ENCODE measurements at regions of chr14 and their contacts with region 1.

Region 1: GRCh38 chr14:57287745-57288144 is 19.0 kb downstream of the AP5M1 start:
- DNase-seq: no peak
- ATAC-seq: no peak
- H3K4me3 ChIP-seq: no peak overlapping the region
- H3K27ac ChIP-seq: no peak overlapping the region
- H3K4me1 ChIP-seq: no peaks in the 10 kb centered on the region
- H3K27me3 ChIP-seq: no peaks in the 10 kb centered on the region
- CTCF ChIP-seq: no peak
- POLR2A ChIP-seq: no peak

Region 2: GRCh38 chr14:57209561-57209960 is 78.2 kb before region 1 on chr14:
- intact Hi-C with region 1: no loop called
- DNase-seq: no peak
- ATAC-seq: no peak
- H3K4me3 ChIP-seq: no peak overlapping the region
- H3K27ac ChIP-seq: no peak overlapping the region
- H3K4me1 ChIP-seq: no peaks in the 10 kb centered on the region
- H3K27me3 ChIP-seq: no peaks in the 10 kb centered on the region
- CTCF ChIP-seq: no peak
- POLR2A ChIP-seq: no peak

Region 3: GRCh38 chr14:57221931-57222330 is 65.8 kb before region 1 on chr14:
- intact Hi-C with region 1: loop called in 1 of 10 experiments (anchors 5 kb)
- DNase-seq: no peak
- ATAC-seq: no peak
- H3K4me3 ChIP-seq: no peak overlapping the region
- H3K27ac ChIP-seq: no peak overlapping the region
- H3K4me1 ChIP-seq: no peaks in the 10 kb centered on the region
- H3K27me3 ChIP-seq: no peaks in the 10 kb centered on the region
- CTCF ChIP-seq: no peak
- POLR2A ChIP-seq: no peak

Measured in heart left ventricle (tissue), 16 donors.